ENCODE measurements at regions of chr11 and their contacts with region 1.

Region 1: GRCh38 chr11:121194731-121195596 is 93.9 kb downstream of the TECTA start:
- DNase-seq: peak; percentile 69

Region 2: DNA sequence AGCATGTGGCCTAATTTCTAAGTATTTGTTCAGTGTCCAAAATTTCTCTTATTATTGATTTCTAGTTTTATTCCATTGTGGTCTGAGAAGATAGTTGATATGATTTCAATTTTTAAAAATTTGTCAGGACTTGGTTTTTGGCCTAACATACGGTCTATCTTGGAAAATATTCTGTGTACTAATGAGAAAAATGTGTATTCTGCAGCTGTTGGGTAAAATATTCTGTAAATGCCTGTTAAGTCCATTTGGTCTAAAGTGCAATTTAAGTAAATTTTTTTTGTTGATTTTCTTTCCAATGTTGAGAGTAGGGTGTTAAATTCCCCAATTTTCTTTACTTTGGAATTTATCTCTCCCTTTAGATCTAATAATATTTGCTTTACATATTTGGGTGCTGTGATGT is 15.7 kb before region 1 on chr11:
- CTCF ChIA-PET with region 1: interaction called, 10 read pairs
- POLR2A ChIA-PET with region 1: no interaction called
- DNase-seq: no peak

Region 3: DNA sequence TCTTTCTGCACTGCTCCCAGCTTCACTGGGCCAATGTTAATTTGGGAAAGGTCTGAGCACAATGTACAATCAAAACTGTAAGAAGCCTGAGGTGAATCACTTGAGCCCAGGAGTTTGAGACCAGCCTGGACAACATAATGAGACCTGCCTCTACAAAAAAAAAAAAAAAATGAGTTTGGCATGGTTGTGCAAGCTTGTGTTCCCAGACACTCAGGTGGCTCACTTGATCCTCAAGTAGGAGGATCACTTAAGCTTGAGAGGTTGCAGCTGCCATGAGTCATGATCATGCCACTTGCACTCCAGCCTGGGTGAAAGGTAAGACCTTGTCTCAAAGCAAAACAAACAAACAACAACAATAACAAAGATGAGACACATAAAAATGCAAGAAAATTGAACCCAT is 59.0 kb after region 1 on chr11:
- CTCF ChIA-PET with region 1: no interaction called
- POLR2A ChIA-PET with region 1: no interaction called
- DNase-seq: no peak